ENCODE measurements at regions of chr5 and their contacts with region 1.

Region 1: GRCh38 chr5:1536322-1536845 is 12.6 kb upstream of the LPCAT1 start:
- DNase-seq: peak; percentile 47 to 94 (median 71)
- ATAC-seq: peak; percentile 96
- H3K4me3 ChIP-seq: peak overlapping the region; percentile 35
- H3K4me3 Mint-ChIP-seq: peak overlapping the region; percentile 72
- H3K27ac ChIP-seq: peak overlapping the region; percentile 64 to 93
- H3K27ac Mint-ChIP-seq: peak overlapping the region; percentile 93
- H3K4me1 ChIP-seq: peaks cover 26% of the 10 kb centered on the region
- H3K4me1 Mint-ChIP-seq: peaks cover 24% of the 10 kb centered on the region
- H3K27me3 ChIP-seq: no peaks in the 10 kb centered on the region
- H3K27me3 Mint-ChIP-seq: no peaks in the 10 kb centered on the region
- CTCF ChIP-seq: no peak

Region 2: GRCh38 chr5:1105350-1106265 is 430.8 kb before region 1 on chr5:
- CTCF ChIA-PET with region 1: no interaction called
- POLR2A ChIA-PET with region 1: no interaction called
- intact Hi-C with region 1: loop called in 1 of 2 experiments (anchors 10 kb)
- DNase-seq: peak in 8 of 9 experiments; percentile 26 to 89 (median 76)
- ATAC-seq: peak; percentile 73
- H3K4me3 ChIP-seq: peak overlapping the region; percentile 41 to 79
- H3K4me3 Mint-ChIP-seq: peak overlapping the region; percentile 78
- H3K27ac ChIP-seq: peak overlapping the region; percentile 31 to 82
- H3K27ac Mint-ChIP-seq: peak overlapping the region; percentile 97
- H3K4me1 ChIP-seq: peaks cover 99% of the 10 kb centered on the region
- H3K4me1 Mint-ChIP-seq: peaks cover 79% of the 10 kb centered on the region
- H3K27me3 ChIP-seq: no peaks in the 10 kb centered on the region
- H3K27me3 Mint-ChIP-seq: no peaks in the 10 kb centered on the region
- CTCF ChIP-seq: no peak

Region 3: GRCh38 chr5:1488943-1489680 is 47.3 kb before region 1 on chr5:
- CTCF ChIA-PET with region 1: interaction called, 4 read pairs
- POLR2A ChIA-PET with region 1: no interaction called
- intact Hi-C with region 1: loop called in 1 of 2 experiments (anchors 2 kb)
- DNase-seq: peak in 5 of 9 experiments; percentile 24 to 75 (median 48)
- ATAC-seq: peak; percentile 76
- H3K4me3 ChIP-seq: no peak overlapping the region
- H3K4me3 Mint-ChIP-seq: no peak overlapping the region
- H3K27ac ChIP-seq: peak overlapping the region in 1 of 2 experiments; percentile 72
- H3K27ac Mint-ChIP-seq: peak overlapping the region; percentile 57
- H3K4me1 ChIP-seq: peaks cover 25% of the 10 kb centered on the region
- H3K4me1 Mint-ChIP-seq: peaks cover 16% of the 10 kb centered on the region
- H3K27me3 ChIP-seq: no peaks in the 10 kb centered on the region
- H3K27me3 Mint-ChIP-seq: no peaks in the 10 kb centered on the region
- CTCF ChIP-seq: no peak

Region 4: GRCh38 chr5:2047341-2047927 is 511.1 kb after region 1 on chr5:
- CTCF ChIA-PET with region 1: no interaction called
- POLR2A ChIA-PET with region 1: no interaction called
- intact Hi-C with region 1: no loop called
- DNase-seq: no peak
- ATAC-seq: no peak
- H3K4me3 ChIP-seq: no peak overlapping the region
- H3K4me3 Mint-ChIP-seq: no peak overlapping the region
- H3K27ac ChIP-seq: no peak overlapping the region
- H3K27ac Mint-ChIP-seq: no peak overlapping the region
- H3K4me1 ChIP-seq: no peaks in the 10 kb centered on the region
- H3K4me1 Mint-ChIP-seq: no peaks in the 10 kb centered on the region
- H3K27me3 ChIP-seq: no peaks in the 10 kb centered on the region
- H3K27me3 Mint-ChIP-seq: peaks cover 27% of the 10 kb centered on the region
- CTCF ChIP-seq: no peak

Measured in CD8-positive, alpha-beta T cell (primary cell).